Activated T-helper 1 cell treated with anti-CD3 and anti-CD28 coated beads, Interleukin-12 subunit alpha, Interleukin-12 subunit beta, Interleukin-2, Interleukin-4 antibody, amounts not matched to agents 30 ng/mL and 10 ng/mL and 1 ng/mL, durations not matched to agents 14 hours and 24 hours and 36 hours (primary cell): ENCODE measurements at regions of chr16 and their contacts with region 1.

Region 1: GRCh38 chr16:3234543-3235541 is at the start of gene ZNF200:
- DNase-seq: peak; percentile 91
- H3K4me3 Mint-ChIP-seq: peak within 1 kb of the TSS; percentile 94
- H3K27ac Mint-ChIP-seq: peak within 1 kb of the TSS; percentile 94
- H3K4me1 Mint-ChIP-seq: peaks cover 15% of the 10 kb centered on the region
- H3K27me3 Mint-ChIP-seq: no peaks in the 10 kb centered on the region
- total RNA-seq, gene ZNF200: 13.6 and 15.8 TPM in 2 replicates

Region 2: GRCh38 chr16:3173892-3174617 is 60.8 kb before region 1 on chr16:
- intact Hi-C with region 1: loop called (anchors 5 kb)
- DNase-seq: no peak
- H3K4me3 Mint-ChIP-seq: peak overlapping the region; percentile 72
- H3K27ac Mint-ChIP-seq: peak overlapping the region; percentile 48
- H3K4me1 Mint-ChIP-seq: peaks cover 29% of the 10 kb centered on the region
- H3K27me3 Mint-ChIP-seq: peaks cover 68% of the 10 kb centered on the region

Region 3: DNA sequence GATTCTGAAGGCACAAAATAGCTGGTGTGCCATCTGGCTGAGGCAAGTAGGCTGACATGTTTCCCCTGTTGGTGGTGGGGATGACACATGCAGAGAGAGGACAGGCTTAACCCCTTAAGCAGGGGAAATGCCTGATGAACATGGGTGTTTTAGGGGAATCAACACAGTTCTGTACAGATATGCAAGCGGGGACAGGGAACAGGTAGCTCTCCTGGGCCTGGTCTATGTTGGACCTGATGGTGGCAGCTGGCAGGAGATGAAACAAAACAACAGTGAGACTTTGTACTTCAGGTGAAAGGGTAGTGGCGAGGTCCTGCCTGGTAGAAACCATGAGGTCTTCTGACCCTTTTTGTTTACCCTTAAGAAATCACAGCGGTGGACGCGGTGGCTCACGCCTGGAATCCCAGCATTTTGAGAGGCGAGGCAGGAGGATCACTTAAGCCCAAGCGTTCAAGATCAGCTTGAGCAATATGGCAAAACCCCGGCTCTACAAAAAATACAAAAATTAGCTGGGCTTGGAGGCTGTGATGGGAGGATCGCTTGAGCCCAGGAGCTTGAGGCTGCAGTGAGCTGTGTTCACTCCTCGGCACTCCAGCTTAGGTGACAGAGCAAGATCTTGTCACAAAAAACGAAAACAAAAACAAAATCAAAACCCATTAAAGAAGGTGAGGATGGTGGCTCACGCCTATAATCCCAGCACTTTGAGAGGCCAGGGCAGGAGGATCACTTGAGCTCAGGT is 36.3 kb before region 1 on chr16:
- intact Hi-C with region 1: no loop called
- DNase-seq: no peak
- H3K4me3 Mint-ChIP-seq: no peak overlapping the region
- H3K27ac Mint-ChIP-seq: no peak overlapping the region
- H3K4me1 Mint-ChIP-seq: no peaks in the 10 kb centered on the region
- H3K27me3 Mint-ChIP-seq: peaks cover 18% of the 10 kb centered on the region

Region 4: GRCh38 chr16:3214904-3215600 is 19.8 kb before region 1 on chr16:
- intact Hi-C with region 1: loop called (anchors 1 kb)
- DNase-seq: peak; percentile 40
- H3K4me3 Mint-ChIP-seq: peak overlapping the region; percentile 34
- H3K27ac Mint-ChIP-seq: peak overlapping the region; percentile 97
- H3K4me1 Mint-ChIP-seq: peaks cover 35% of the 10 kb centered on the region
- H3K27me3 Mint-ChIP-seq: no peaks in the 10 kb centered on the region

Region 5: DNA sequence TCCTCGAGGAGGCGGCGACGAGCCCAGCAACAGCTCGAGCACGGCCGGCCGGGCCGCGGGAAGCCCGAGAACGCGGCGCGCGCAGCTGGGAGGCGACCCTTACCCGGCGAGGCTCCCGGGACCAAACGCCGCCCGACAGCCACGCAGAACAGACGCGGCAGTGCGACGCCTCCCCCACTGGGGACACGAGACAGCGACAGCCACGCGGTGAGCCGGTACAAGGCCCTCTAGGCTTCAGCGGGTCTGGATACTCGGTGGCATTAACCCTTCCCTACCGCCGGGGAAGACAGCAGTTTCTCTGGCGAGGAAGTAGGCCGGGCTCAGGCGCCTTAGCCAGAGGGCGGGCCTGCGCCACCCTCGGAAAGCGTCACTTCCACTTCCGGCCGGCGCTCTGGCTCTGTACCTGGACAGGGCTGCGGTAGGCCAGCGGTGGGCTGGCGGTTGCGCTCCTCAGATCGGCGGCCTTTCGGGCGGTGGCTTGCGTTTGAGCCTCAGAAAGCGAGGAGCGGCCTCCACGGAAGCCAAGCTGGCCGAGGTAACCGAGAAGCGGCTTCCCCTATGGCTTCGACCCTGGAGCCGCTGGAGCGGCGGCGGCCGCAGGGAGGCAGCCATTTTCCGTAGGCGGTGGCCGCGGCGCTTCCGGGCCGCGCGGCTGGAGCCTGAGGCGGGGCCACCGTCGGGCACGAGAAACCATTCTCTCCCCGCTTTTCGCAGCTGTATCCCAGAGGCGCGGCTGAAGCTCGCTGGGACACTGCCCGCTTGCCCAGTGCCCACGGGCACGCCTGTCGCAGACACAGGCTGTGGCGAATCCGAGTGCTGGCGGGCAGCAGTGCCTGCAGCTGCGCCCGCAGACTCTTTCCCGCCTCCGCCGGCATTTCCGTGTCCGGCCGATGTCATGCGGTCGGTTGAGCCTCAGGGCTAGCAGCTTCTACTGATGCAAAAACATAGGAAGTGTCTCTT is 70.5 kb after region 1 on chr16 and contains the starts of genes TIGD7 and ZNF75A:
- intact Hi-C with region 1: loop called (anchors 2 kb)
- DNase-seq: peak; percentile 79
- H3K4me3 Mint-ChIP-seq: peak within 1 kb of the TSS; percentile 75
- H3K27ac Mint-ChIP-seq: peak within 1 kb of the TSS; percentile 70
- H3K4me1 Mint-ChIP-seq: peaks cover 8% of the 10 kb centered on the region
- H3K27me3 Mint-ChIP-seq: no peaks in the 10 kb centered on the region
- total RNA-seq, gene TIGD7: 2.0 and 3.1 TPM in 2 replicates
- total RNA-seq, gene ZNF75A: 26.5 and 27.6 TPM in 2 replicates

Region 6: GRCh38 chr16:3443108-3444031 is 208.5 kb after region 1 on chr16 and contains the starts of genes NAA60 and ZNF597:
- intact Hi-C with region 1: loop called (anchors 1 kb)
- DNase-seq: peak; percentile 79
- H3K4me3 Mint-ChIP-seq: peak within 1 kb of the TSS; percentile 99
- H3K27ac Mint-ChIP-seq: peak within 1 kb of the TSS; percentile 98
- H3K4me1 Mint-ChIP-seq: peaks cover 15% of the 10 kb centered on the region
- H3K27me3 Mint-ChIP-seq: no peaks in the 10 kb centered on the region
- total RNA-seq, gene NAA60: 35.4 and 38.3 TPM in 2 replicates
- total RNA-seq, gene ZNF597: 2.6 TPM in 2 replicates